CD14-positive monocyte (primary cell): ENCODE measurements at regions of chr1 and their contacts with region 1.

Region 1: DNA sequence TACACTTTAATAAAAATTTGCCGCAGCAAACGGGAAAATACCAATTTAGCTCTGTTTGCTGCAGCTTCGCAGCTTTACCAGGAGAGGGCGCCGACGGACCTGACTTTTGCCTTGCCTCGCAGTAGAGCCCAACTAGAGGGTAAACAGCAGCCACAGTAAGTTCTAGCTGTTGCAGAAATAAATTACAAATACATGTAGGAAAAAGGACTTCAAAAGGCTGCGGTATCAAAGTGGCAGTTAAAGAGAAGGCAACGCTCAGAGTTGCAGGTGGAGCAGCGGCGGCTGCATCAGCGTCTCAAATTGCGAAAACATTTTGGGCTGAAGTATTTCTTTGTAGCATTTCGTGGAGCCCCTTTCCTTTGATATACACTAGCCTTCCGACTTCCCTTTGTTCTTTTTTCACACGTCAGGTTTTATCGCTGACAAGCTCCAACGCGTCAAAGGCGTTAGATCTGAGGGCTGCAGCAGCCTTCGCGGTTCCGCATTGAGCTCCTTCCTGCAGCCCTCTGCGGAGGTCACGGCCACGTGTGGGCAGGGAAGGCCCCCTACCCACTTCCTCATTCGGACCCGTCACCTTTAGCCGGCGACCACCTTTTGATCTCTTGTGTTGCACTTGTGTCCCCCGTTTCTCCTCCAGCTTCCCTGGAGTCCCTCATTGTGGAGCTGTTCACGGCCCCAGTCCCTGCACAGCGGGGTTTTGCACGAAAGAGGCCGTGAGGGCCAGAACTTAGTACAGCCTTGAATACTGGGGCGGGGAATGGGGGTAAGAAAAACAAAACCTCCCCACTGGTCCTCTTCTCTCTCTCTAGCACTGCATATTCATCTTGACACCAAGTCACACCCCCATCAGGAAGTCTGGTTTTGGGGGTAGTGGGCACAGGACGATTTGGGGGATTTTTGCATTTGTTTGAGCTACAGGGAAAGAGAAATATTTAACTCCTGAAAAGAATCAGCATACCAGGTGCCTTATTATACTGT is 72.8 kb downstream of the S1PR1 start:
- DNase-seq: peak; percentile 45 to 63 (median 56)
- H3K4me3 ChIP-seq: peak overlapping the region; percentile 32 to 82 (median 61)
- H3K4me3 Mint-ChIP-seq: peak overlapping the region; percentile 82 to 97
- H3K27ac ChIP-seq: peak overlapping the region in 1 of 2 donors; percentile 44
- H3K27ac Mint-ChIP-seq: peak overlapping the region in 6 of 7 donors; percentile 31 to 72 (median 58)
- H3K4me1 ChIP-seq: peaks cover 7 to 16% of the 10 kb centered on the region in 2 donors
- H3K4me1 Mint-ChIP-seq: peaks cover 29% of the 10 kb centered on the region
- H3K27me3 ChIP-seq: no peaks in the 10 kb centered on the region
- H3K27me3 Mint-ChIP-seq: peaks cover 11 to 20% (median 15%) of the 10 kb centered on the region in 3 donors
- CTCF ChIP-seq: peak; percentile 86

Region 2: DNA sequence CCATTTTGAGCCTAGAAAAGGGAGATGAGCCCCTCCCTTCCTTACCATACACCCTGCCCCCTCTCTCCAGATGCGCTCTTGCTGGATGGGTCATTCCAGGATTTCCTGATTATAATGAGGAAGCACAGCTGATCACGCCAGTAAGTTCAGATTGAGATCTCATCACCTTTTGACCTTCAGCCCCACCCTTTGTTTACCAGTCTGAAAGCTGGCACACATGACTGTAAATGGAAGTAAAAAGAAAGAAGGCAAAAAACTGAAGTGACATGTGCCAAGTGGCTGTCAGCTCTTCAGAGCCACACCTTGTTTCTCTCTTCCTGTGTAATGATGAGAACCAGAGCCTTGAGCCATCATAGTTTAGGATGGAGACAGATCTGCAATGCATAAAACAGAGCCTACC is 44.9 kb before region 1 on chr1:
- intact Hi-C with region 1: no loop called
- DNase-seq: peak; percentile 41 to 72 (median 54)
- H3K4me3 ChIP-seq: peak overlapping the region in 1 of 3 experiments; percentile 2
- H3K4me3 Mint-ChIP-seq: peak overlapping the region in 1 of 2 donors; percentile 77
- H3K27ac ChIP-seq: no peak overlapping the region
- H3K27ac Mint-ChIP-seq: peak overlapping the region in 5 of 7 donors; percentile 24 to 82 (median 63)
- H3K4me1 ChIP-seq: peaks cover 51 to 58% of the 10 kb centered on the region in 2 donors
- H3K4me1 Mint-ChIP-seq: peaks cover 52% of the 10 kb centered on the region
- H3K27me3 ChIP-seq: no peaks in the 10 kb centered on the region
- H3K27me3 Mint-ChIP-seq: no peaks in the 10 kb centered on the region
- CTCF ChIP-seq: no peak

Region 3: DNA sequence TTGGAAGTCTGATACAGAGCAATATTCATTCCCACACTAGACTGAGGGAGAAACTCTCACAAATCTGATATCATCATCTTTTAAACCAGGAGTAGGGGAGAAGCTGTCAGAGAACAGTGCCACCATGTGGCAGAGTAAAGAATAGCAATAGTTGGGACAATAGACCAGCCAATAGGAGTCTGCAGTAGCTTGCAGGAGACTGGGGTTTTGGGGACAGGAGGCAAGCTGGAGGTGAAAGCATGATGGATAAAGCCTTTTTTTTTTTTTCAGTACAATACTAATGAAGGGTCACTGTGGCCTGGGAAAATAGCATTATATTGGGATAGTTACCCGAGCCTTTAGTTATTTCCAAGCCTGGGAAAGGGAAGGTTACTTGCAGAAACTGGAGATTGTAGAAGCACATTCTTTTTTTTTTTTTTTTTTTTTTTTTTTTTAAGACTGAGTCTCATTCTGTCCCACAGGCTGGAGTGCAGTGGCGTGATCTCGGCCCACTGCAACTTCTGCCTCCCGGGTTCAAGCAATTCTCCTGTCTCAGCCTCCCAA is 47.9 kb after region 1 on chr1:
- intact Hi-C with region 1: loop called in 1 of 2 experiments (anchors 2 kb)
- DNase-seq: peak; percentile 55 to 73 (median 67)
- H3K4me3 ChIP-seq: no peak overlapping the region
- H3K4me3 Mint-ChIP-seq: no peak overlapping the region
- H3K27ac ChIP-seq: no peak overlapping the region
- H3K27ac Mint-ChIP-seq: no peak overlapping the region
- H3K4me1 ChIP-seq: no peaks in the 10 kb centered on the region
- H3K4me1 Mint-ChIP-seq: peaks cover 2% of the 10 kb centered on the region
- H3K27me3 ChIP-seq: no peaks in the 10 kb centered on the region
- H3K27me3 Mint-ChIP-seq: peaks cover 0 to 2% (median 0%) of the 10 kb centered on the region in 3 donors
- CTCF ChIP-seq: peak; percentile 81